GM10248 (cell line): ENCODE measurements at regions of chr6 and their contacts with region 1.

Region 1: GRCh38 chr6:134640975-134641429 is 308.9 kb downstream of the ALDH8A1 start:
- DNase-seq: peak; percentile 67
- CTCF ChIP-seq: peak; percentile 96

Region 2: DNA sequence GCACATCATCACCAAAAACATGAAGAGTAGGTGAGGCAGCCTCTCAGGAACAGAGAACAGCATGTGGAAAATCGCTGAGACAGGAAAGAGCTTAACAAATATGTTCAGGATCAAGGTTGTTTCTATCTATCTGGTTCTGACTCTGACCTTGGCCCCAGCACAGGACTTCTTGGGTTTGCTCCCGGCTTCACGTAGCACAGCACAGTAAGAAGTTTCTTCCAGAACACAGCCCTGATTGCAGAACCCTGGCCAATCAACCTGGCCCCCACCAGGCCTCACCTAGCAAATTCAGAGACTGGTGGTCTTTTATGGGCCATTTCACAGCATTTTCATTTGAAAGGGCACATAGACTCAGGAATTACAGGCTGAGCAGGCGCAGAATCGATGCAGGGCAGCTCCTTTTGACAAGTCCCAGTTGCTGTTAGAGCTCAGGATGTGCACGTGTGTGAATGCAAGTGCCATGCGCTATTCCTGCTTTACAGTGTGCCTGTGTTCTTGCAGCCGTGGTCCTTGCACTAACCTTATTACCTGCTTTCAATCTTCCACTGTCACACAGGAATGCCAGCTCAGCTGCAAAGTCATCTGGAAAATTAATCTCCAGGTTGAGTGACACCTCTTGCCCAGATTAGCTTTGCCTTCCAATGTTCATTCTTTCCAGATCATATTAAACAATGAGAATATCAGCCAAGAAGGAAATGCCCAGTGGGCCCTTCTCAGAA is 488.1 kb before region 1 on chr6:
- CTCF ChIA-PET with region 1: interaction called, 22 read pairs
- POLR2A ChIA-PET with region 1: no interaction called
- DNase-seq: no peak
- CTCF ChIP-seq: no peak

Region 3: DNA sequence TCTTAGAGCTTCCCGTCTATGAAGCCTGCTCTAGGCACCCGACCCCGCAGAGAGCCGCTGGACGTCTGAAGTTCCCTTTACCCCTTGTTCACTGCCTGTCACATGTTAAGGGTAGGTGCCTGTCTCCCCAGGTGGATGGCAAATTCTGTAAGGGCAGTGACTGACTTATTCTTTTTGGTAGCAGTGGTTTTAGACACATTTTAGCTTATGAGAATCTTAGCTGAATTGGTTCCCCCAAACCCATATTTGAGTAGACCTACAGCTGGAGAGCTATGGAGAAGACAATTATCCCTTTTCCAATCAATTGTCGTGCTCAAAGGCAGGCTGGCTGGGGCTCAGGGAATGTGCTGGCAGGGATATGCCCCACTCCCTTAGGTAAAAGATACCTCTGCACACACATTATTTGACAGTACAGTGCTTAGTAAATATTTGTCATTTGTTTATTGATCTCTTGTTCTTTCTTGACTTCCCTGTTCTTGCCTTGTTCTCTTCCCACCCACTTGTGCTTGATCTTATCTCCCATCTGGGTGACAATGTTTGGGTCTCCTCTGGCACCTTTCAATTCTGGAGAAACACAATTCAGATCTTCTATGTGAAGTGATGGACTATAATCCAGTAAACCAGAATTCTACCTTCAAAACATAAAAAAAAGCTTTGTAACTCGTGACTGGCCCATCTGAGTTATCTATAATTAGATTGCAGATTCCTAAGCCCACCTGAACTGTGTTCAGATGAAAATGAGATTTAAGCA is 474.3 kb before region 1 on chr6:
- CTCF ChIA-PET with region 1: interaction called, 21 read pairs
- POLR2A ChIA-PET with region 1: no interaction called
- DNase-seq: no peak
- CTCF ChIP-seq: no peak

Region 4: GRCh38 chr6:134619789-134620188 is 21.2 kb before region 1 on chr6:
- CTCF ChIA-PET with region 1: interaction called, 39 read pairs
- POLR2A ChIA-PET with region 1: no interaction called
- DNase-seq: no peak
- CTCF ChIP-seq: no peak

Region 5: GRCh38 chr6:134657751-134658522 is 16.9 kb after region 1 on chr6:
- CTCF ChIA-PET with region 1: interaction called, 23 read pairs
- POLR2A ChIA-PET with region 1: no interaction called
- DNase-seq: no peak
- CTCF ChIP-seq: no peak

Region 6: DNA sequence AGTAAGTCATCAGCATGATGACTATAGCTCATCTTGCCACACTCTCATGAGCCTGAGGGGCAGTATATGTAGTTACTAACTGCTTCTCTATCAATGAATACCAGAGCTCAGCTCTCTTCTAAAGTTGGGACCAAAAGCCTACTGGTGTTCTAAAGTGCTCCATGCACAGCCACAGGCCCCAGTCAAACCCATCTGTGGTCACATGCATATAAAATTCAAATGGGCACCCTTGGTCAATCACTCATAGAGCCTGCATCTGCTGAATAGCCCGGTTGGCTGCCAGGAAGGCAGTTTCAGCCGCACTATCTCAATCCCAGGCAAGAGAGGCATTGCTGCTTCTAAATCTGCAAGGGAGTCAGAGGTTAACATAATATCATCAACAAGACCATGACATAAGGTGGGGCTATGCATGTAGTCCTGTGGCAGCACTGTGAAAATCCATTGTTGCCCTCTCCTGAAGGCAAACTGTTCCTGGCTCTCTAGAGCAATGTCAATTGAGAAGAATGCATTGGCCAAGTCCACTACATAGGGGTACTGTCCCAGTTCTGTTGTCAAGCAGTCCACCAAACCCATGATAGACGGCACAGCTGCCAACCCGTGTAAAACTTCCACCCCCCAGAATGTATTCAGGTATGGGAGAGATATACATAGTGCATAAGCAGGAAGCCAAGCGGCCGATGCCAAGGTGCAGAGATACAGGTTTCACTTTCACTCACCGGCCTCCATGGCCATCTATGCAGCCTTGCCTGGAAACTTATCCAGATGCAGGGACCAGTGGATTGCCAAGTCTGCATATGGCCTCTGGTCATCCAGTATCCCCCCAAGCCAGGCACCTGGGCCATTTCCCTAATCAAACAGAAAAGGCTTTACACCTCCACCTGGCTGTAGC is 232.7 kb after region 1 on chr6:
- CTCF ChIA-PET with region 1: no interaction called
- POLR2A ChIA-PET with region 1: no interaction called
- DNase-seq: no peak
- CTCF ChIP-seq: no peak